Left cardiac atrium (tissue), 4 donors: ENCODE measurements at regions of chr3 and their contacts with region 1.

Region 1: DNA sequence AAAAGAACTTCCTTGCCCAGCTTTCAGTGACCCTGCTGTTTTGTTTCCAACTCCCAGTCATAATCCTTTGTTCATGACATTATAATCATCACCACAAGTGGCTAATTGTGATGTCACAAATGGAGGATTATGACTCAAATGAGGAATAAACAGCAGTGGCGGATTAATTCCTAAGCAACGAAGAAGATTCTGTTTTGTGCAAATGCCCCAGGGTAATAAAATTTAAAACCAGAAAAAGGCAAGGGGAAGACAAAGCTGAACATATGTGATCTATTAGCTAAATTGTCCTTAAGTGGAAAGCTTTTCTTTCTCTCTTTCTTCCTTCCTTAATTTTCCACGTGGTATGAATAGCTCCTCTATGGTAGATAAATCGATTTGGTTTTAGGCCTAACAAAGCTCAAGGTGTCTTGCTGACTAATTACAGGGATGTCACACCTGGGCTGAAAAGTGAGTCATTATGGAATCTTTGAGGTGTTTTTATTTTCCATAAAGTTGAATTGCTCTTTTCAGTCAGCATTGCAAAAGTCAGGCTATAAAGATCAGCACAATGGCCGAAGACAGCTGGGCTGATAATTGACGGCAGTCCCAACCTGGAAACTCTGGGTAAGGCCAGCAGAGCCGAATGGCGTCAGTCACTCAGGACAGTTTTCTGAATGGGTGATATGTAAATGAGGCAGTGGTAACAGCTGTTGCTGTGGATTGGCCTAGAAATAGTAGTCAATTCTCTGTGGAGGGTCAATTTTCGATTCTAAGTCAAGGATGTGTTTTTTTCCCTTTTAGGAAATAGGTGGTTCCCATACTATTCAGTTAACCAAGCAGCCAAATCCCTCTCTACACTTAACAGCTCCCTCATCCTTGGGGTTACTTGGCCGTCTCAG is 121.5 kb downstream of the PTPRG start:
- DNase-seq: no peak
- ATAC-seq: peak in 1 of 2 donors; percentile 29

Region 2: GRCh38 chr3:61574854-61575253 is 108.1 kb before region 1 on chr3:
- intact Hi-C with region 1: loop called in 1 of 2 experiments (anchors 5 kb)
- DNase-seq: peak; percentile 30
- ATAC-seq: peak in 1 of 2 donors; percentile 21

Region 3: DNA sequence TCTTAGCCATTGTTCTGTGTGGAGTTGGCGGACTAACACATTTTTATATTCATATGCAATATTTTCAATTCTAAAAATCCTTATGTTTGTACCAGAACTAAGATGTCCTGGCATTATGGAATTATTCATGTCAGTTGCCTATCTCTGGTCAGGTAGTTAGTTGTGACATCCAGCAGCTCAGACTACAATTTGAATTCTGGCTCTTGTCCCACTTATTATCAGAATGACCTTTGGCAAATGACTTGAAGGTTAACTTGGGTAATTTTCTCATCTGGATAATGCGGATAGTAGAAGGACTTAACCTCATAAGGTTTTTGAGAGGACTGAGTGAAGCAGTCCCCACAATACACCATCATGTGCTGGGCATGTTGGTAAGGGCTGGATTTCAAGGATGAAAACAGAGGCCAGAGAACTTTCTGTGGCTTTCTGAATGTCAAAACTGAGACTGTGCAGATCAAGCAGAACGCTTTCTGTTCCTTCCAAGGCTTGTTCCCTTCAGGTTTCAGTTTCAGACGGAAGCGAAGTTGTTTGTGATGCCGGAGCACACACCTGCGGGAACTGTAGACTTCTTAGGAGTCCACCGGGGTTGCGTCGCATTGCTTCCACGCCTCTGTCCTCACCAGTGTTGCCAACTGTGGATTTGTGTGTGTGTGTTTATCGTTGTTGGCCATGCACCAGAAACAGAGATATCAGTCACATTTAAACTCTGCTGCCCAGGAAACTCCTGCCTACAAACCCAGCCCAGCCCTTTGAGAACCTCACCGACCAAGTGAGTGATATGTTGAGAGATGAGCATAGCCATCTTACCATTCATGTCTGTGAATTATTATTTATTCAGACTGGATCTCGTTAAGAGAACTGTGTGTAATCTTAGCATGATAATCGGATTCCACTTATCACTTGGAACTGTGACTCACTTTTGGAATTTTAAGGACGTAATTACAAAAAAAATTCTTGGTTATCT is 45.5 kb before region 1 on chr3:
- intact Hi-C with region 1: loop called in 1 of 2 experiments (anchors 10 kb)
- DNase-seq: peak; percentile 39
- ATAC-seq: peak; percentile 78 to 90